CD8-positive, alpha-beta memory T cell (primary cell): ENCODE measurements at regions of chr12 and their contacts with region 1.

Region 1: GRCh38 chr12:8609061-8609570 is 3.5 kb downstream of the AICDA start:
- DNase-seq: no peak
- H3K4me3 ChIP-seq: peak overlapping the region; percentile 4
- H3K4me3 Mint-ChIP-seq: peak overlapping the region in 6 of 7 donors; percentile 27 to 70 (median 54)
- H3K27ac ChIP-seq: no peak overlapping the region
- H3K27ac Mint-ChIP-seq: peak overlapping the region in 2 of 8 donors; percentile 5 to 30
- H3K4me1 ChIP-seq: peaks cover 3% of the 10 kb centered on the region
- H3K4me1 Mint-ChIP-seq: peaks cover 10 to 12% (median 11%) of the 10 kb centered on the region in 3 donors
- H3K27me3 ChIP-seq: no peaks in the 10 kb centered on the region
- H3K27me3 Mint-ChIP-seq: peaks cover 10 to 12% of the 10 kb centered on the region in 2 donors

Region 2: GRCh38 chr12:8590842-8591550 is 18.1 kb before region 1 on chr12:
- CTCF ChIA-PET with region 1: interaction called, 10 read pairs
- POLR2A ChIA-PET with region 1: no interaction called
- DNase-seq: no peak
- H3K4me3 ChIP-seq: no peak overlapping the region
- H3K4me3 Mint-ChIP-seq: peak overlapping the region in 3 of 7 donors; percentile 25 to 59 (median 52)
- H3K27ac ChIP-seq: no peak overlapping the region
- H3K27ac Mint-ChIP-seq: peak overlapping the region in 3 of 8 donors; percentile 0 to 77 (median 43)
- H3K4me1 ChIP-seq: no peaks in the 10 kb centered on the region
- H3K4me1 Mint-ChIP-seq: peaks cover 9 to 10% (median 10%) of the 10 kb centered on the region in 3 donors
- H3K27me3 ChIP-seq: no peaks in the 10 kb centered on the region
- H3K27me3 Mint-ChIP-seq: peaks cover 0 to 2% of the 10 kb centered on the region in 2 donors